Motor neuron (in vitro differentiated cells): ENCODE measurements at regions of chr5 and their contacts with region 1.

Region 1: GRCh38 chr5:35926389-35927051 is 11.9 kb downstream of the CAPSL start:
- ATAC-seq: peak; percentile 48 to 83 (median 78)
- H3K4me3 ChIP-seq: no peak overlapping the region
- H3K27ac ChIP-seq: no peak overlapping the region
- H3K4me1 ChIP-seq: no peaks in the 10 kb centered on the region

Region 2: DNA sequence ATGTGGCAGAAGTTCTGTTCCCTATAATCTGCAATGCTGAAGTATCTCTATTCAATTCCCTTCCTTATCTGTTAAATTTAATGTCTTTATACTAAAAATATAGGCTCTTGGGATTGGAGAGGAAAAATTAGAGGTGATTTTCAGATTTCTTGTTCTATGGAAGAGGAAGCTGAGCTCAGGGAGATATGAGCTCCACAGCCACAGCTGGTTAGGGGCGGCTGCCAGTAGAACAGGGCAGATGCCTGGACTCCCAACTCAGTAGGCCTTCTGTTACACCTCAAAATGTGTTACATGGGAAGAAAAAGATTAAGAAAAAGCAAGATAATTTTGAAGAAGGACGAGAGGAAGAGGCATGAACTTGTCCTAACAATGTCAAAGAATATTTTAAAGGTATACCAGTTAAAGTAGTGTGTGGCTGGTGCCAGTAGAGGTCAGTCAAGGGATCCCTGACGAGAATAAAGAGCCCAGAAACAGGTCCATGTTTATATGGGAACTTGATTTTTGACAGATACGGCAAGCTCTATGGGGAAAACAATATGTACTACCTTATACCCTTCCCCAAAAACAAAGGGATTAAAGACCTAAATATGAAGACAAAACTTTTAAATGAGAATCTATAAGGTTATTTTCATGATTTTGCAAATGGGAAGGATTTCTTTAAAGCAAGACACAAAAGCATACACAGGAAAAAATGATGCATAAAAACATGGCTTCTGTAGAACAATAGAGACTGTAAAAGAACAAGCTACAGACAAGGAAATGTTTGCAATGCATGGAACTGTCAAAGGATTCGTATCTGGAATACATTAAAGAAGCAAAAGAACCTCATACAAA is 968.4 kb before region 1 on chr5:
- in situ Hi-C with region 1: loop called in 1 of 9 experiments (anchors 25 kb)
- ATAC-seq: peak in 6 of 8 experiments; percentile 36 to 89 (median 76)
- H3K4me3 ChIP-seq: no peak overlapping the region
- H3K27ac ChIP-seq: no peak overlapping the region
- H3K4me1 ChIP-seq: no peaks in the 10 kb centered on the region

Region 3: DNA sequence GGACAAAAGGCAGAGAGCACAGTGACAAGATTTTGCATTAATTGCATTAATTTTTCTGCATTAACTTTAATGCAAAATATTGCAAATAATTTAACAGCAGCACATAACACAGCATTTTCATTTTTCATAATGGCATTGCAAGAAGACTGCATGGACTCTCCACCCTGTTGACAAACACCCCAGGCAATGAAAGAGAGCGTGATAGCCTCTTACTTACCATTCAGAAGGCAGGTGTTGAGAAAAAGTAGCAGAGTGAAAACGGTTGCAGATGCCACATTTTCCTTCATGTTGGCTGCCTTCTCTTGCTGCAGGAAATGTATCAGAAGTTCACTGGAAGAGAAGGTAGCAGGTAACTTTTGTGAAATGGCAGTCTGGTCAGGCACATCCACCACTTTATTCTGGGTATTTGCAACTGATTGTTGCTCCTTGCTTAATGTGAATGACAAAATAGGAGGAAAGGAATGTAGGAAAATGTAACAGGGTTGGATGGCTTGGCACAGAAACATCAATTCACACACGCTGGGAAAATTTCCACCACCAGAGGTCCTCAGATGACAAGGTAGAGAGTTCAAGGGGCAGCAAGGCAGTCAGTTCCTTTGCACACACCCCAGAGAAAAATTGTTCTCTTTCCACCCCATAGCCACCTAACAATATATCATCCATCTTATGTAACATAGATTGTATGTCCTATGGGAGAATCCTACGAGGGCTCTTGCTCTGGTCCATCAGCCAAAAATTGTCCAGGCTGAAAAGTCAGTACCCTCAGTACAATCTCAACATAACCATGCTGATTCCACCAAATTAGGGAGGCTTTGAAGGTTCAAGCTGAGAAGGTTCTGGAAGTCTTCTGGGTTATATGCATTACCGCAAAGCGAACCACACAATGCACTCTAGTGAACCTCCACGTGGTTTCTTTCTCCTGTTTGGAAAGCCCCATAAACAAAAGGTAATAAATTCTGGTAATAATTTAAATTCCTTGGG is 836.9 kb before region 1 on chr5:
- in situ Hi-C with region 1: loop called in 2 of 9 experiments (anchors 25 kb)
- ATAC-seq: peak in 4 of 8 experiments; percentile 19 to 92 (median 88)
- H3K4me3 ChIP-seq: no peak overlapping the region
- H3K27ac ChIP-seq: no peak overlapping the region
- H3K4me1 ChIP-seq: peaks cover 2 to 12% of the 10 kb centered on the region in 2 donors

Region 4: GRCh38 chr5:35313291-35313690 is 613.2 kb before region 1 on chr5:
- in situ Hi-C with region 1: no loop called
- ATAC-seq: no peak
- H3K4me3 ChIP-seq: no peak overlapping the region
- H3K27ac ChIP-seq: no peak overlapping the region
- H3K4me1 ChIP-seq: peaks cover 6 to 7% of the 10 kb centered on the region in 2 donors

Region 5: GRCh38 chr5:35644543-35644942 is 282.0 kb before region 1 on chr5:
- in situ Hi-C with region 1: loop called in 1 of 9 experiments (anchors 25 kb)
- ATAC-seq: no peak
- H3K4me3 ChIP-seq: no peak overlapping the region
- H3K27ac ChIP-seq: no peak overlapping the region
- H3K4me1 ChIP-seq: no peaks in the 10 kb centered on the region

Region 6: DNA sequence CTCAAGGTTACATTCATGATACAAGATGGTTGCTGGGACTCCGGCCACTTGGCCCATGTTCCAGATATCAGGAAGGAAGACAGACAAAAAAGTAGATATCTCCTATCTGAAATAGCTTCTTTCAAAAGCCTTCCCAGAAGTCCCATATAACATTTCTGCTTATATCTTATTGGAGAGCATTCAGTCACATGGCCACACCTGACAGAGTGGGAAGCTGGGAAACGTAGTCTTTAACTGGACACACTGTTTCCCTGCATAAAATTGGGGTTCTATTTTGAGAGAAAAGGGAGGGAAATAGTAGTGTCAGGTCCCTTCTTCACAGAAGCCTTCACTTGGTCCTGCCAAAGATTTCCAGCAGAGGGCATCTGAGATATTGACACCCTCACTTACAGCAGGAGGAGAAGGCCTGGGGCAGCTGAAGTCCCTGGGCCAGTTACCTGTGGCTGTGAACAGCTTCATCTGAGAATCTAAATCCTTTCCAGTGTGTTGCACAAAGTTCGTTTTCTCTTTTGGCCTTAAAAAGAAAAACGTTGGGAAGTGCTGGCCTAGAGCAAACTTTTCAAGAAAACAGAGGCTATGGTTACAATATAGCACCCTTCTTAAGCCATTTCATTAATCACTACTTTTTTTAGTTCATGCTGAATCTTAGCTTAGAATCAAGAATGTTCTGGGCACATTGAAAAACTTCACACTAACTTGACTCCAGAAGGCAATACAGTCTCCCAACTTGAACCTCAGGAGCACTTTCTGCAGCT is 275.3 kb before region 1 on chr5:
- in situ Hi-C with region 1: loop called in 2 of 9 experiments (anchors 25 kb)
- ATAC-seq: peak in 4 of 8 experiments; percentile 41 to 87 (median 76)
- H3K4me3 ChIP-seq: no peak overlapping the region
- H3K27ac ChIP-seq: no peak overlapping the region
- H3K4me1 ChIP-seq: peaks cover 0 to 2% of the 10 kb centered on the region in 2 donors

Region 7: DNA sequence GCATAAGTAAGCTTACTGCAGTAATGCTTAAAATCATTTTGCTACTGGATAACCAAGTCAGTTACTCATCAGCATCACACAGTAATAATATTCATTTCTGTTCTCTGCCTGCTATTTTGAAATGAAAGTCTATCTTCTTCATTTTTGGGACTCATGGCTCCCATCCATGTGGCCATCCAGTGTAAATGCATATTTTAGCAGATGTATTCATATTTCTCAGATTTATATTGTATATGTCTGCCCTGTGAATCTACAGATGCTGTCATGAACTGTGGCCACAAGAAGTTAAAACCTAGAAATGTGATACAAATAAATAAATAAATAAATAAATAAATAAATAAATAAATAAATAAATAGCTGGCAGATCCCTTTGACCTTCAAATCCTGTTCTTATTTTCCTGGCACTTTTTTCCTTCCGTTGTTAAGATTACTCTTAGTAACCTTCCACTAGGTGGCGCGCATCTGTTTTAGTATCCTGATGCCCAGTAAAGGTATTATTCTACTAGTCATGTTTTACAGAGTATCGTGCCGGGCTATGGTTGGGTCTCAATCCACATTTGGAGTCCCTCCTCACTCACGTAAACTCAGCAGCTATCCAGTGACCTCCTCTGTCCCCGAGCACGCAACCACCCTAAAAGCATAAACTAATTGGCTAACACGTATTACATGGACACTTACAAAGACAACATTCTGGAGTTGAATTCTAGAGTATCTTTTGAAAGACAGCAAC is 149.0 kb before region 1 on chr5:
- in situ Hi-C with region 1: loop called in 3 of 9 experiments (anchors 25 kb)
- ATAC-seq: peak in 4 of 8 experiments; percentile 45 to 62 (median 57)
- H3K4me3 ChIP-seq: no peak overlapping the region
- H3K27ac ChIP-seq: no peak overlapping the region
- H3K4me1 ChIP-seq: no peaks in the 10 kb centered on the region